CD4-positive, alpha-beta T cell (primary cell): ENCODE measurements at regions of chr9 and their contacts with region 1.

Region 1: DNA sequence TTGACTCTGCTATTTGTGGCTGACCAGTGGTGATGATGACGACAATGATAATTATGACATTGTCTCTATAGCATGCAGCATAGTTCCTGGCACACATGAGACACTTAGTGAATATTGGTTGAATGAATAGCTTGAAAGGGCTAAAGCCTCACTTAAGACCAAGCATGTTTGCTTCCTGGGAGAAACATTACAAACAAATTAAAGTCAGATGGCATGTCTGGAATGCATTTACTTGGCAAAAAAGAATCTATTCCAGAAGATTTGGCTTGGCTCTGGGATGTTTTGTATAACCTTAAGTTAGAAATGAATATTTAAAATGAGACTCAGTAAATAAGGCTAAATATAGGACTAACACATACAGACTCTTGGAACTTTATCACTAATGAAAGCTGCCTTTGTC is 21.6 kb downstream of the GAS1 start:
- DNase-seq: no peak
- ATAC-seq: no peak
- H3K4me3 ChIP-seq: no peak overlapping the region
- H3K4me3 Mint-ChIP-seq: no peak overlapping the region
- H3K27ac ChIP-seq: no peak overlapping the region
- H3K27ac Mint-ChIP-seq: no peak overlapping the region
- H3K4me1 ChIP-seq: no peaks in the 10 kb centered on the region
- H3K4me1 Mint-ChIP-seq: no peaks in the 10 kb centered on the region
- H3K27me3 ChIP-seq: peaks cover 3 to 18% of the 10 kb centered on the region in 2 experiments
- H3K27me3 Mint-ChIP-seq: peaks cover 73% of the 10 kb centered on the region
- CTCF ChIP-seq: no peak

Region 2: DNA sequence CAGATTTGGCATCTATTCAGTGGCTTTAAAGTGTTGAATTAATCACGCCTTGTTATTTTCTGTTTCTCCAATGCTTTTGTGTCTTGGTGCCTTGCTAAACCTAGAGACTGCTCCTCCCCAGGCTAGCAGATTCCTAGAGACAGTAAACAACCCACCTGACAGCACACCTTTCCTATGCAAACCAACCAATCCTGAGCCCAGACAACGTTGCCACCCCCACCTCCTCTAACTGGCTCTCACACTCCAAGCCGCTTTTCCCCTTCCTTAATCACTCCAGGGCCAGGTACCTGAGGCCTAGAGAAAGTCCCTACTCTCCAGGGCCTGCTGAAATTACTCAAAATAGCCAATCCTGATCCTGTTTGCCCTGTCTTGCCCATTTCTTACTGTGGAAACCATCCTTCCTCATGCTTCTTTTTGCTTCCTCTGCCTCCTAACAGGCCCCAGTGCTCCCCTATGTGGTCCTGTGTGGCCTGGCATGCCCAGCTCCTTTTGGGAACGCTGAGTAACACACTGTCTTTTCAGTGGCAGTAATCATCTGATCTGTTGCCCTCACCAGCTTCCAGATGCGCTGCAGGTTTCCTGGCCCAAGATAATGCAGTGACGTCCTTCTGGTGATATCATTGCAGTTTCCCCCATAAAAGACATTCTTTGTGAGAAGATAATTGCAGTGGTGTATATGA is 31.7 kb before region 1 on chr9:
- CTCF ChIA-PET with region 1: no interaction called
- POLR2A ChIA-PET with region 1: no interaction called
- intact Hi-C with region 1: no loop called
- DNase-seq: no peak
- ATAC-seq: no peak
- H3K4me3 ChIP-seq: no peak overlapping the region
- H3K4me3 Mint-ChIP-seq: no peak overlapping the region
- H3K27ac ChIP-seq: no peak overlapping the region
- H3K27ac Mint-ChIP-seq: no peak overlapping the region
- H3K4me1 ChIP-seq: no peaks in the 10 kb centered on the region
- H3K4me1 Mint-ChIP-seq: no peaks in the 10 kb centered on the region
- H3K27me3 ChIP-seq: no peaks in the 10 kb centered on the region
- H3K27me3 Mint-ChIP-seq: peaks cover 11% of the 10 kb centered on the region
- CTCF ChIP-seq: no peak

Region 3: GRCh38 chr9:86968258-86968920 is 42.7 kb after region 1 on chr9:
- CTCF ChIA-PET with region 1: no interaction called
- POLR2A ChIA-PET with region 1: no interaction called
- intact Hi-C with region 1: loop called in 1 of 2 experiments (anchors 5 kb)
- DNase-seq: no peak
- ATAC-seq: no peak
- H3K4me3 ChIP-seq: no peak overlapping the region
- H3K4me3 Mint-ChIP-seq: no peak overlapping the region
- H3K27ac ChIP-seq: no peak overlapping the region
- H3K27ac Mint-ChIP-seq: no peak overlapping the region
- H3K4me1 ChIP-seq: no peaks in the 10 kb centered on the region
- H3K4me1 Mint-ChIP-seq: no peaks in the 10 kb centered on the region
- H3K27me3 ChIP-seq: peaks cover 4 to 12% of the 10 kb centered on the region in 2 experiments
- H3K27me3 Mint-ChIP-seq: peaks cover 44% of the 10 kb centered on the region
- CTCF ChIP-seq: no peak

Region 4: GRCh38 chr9:88578121-88579054 is 1652.7 kb after region 1 on chr9:
- CTCF ChIA-PET with region 1: no interaction called
- POLR2A ChIA-PET with region 1: no interaction called
- intact Hi-C with region 1: no loop called
- DNase-seq: peak; percentile 32 to 77 (median 54)
- ATAC-seq: no peak
- H3K4me3 ChIP-seq: no peak overlapping the region
- H3K4me3 Mint-ChIP-seq: no peak overlapping the region
- H3K27ac ChIP-seq: no peak overlapping the region
- H3K27ac Mint-ChIP-seq: no peak overlapping the region
- H3K4me1 ChIP-seq: peaks cover 9% of the 10 kb centered on the region
- H3K4me1 Mint-ChIP-seq: no peaks in the 10 kb centered on the region
- H3K27me3 ChIP-seq: peaks cover 0 to 4% of the 10 kb centered on the region in 2 experiments
- H3K27me3 Mint-ChIP-seq: peaks cover 11% of the 10 kb centered on the region
- CTCF ChIP-seq: peak; percentile 97